PC-9 (cell line): ENCODE measurements at regions of chr6 and their contacts with region 1.

Region 1: GRCh38 chr6:9704989-9705388 is 709.9 kb downstream of the TFAP2A start:
- DNase-seq: no peak
- H3K4me3 ChIP-seq: no peak overlapping the region
- H3K27ac ChIP-seq: no peak overlapping the region
- H3K4me1 ChIP-seq: no peaks in the 10 kb centered on the region
- H3K27me3 ChIP-seq: no peaks in the 10 kb centered on the region
- CTCF ChIP-seq: no peak

Region 2: GRCh38 chr6:9717568-9717967 is 12.6 kb after region 1 on chr6:
- CTCF ChIA-PET with region 1: no interaction called
- POLR2A ChIA-PET with region 1: no interaction called
- intact Hi-C with region 1: loop called (anchors 1 kb)
- DNase-seq: no peak
- H3K4me3 ChIP-seq: no peak overlapping the region
- H3K27ac ChIP-seq: no peak overlapping the region
- H3K4me1 ChIP-seq: no peaks in the 10 kb centered on the region
- H3K27me3 ChIP-seq: no peaks in the 10 kb centered on the region
- CTCF ChIP-seq: no peak

Region 3: DNA sequence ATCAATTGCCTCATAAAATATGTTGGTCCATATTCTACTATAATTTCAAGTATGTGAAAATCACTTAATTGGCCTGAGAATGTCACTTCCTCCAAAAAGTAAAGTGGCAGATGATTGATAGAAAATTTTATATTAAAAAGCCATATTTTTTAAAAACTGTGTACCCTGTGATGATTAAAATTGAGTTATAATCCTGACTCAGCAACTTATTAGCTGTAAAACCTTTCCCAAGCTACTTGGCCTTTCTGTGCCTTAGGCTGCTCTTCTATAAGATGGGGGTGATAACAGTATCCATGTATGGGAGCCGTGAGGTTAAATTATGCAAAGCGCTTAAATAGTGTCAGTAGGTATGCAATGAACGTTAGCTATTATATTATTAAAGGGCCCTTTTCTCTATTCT is 185.5 kb after region 1 on chr6:
- CTCF ChIA-PET with region 1: no interaction called
- POLR2A ChIA-PET with region 1: no interaction called
- intact Hi-C with region 1: no loop called
- DNase-seq: no peak
- H3K4me3 ChIP-seq: no peak overlapping the region
- H3K27ac ChIP-seq: no peak overlapping the region
- H3K4me1 ChIP-seq: no peaks in the 10 kb centered on the region
- H3K27me3 ChIP-seq: no peaks in the 10 kb centered on the region
- CTCF ChIP-seq: no peak